Cardiac septum (tissue), 1 donor: ENCODE measurements at regions of chr12 and their contacts with region 1.

Region 1: DNA sequence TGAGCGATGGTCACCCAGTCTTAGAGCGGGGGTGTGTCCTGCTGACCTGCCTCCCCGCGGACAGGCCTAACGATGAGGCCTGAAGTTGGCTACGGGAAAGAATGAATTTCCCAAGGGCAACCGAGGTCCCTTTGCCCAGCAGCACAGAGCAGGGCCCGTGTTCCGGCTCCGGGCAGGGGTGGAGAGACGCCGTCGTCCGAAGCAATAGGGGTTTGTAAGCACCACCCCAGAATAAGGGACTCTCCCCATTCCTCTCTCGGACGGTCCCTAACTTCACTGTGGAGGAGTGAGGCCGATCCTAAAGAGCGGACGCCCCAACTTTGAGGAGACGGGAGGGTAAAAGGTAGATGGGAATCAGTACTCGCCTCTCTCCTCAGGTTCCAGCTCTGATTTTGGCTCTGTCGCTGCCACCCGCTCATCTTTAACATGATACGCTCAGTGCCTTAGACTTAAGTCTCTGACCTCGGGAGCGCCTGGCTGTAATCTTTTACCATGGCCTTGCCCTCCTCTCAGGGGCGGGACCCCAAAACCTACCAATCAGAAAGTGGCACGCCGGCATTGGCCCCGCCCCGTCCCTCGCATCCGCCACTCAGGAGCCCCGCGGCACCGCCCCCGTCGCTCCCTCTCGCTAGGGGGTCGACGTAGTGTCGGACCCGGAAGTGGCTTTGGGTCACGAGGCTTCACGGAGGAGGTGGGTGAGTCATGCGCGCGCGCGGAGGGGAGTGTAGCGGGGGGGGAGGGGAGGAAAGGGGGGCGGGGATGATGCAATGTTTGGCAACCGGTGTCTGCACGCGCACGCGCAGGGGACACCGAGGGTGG is at the start of gene DDIT3:
- DNase-seq: peak; percentile 100
- total RNA-seq, gene DDIT3: 24.0 TPM

Region 2: GRCh38 chr12:57487597-57488401 is 32.5 kb before region 1 on chr12 and contains the start of gene MARS1:
- intact Hi-C with region 1: loop called (anchors 5 kb)
- DNase-seq: peak; percentile 97
- total RNA-seq, gene MARS1: 89.2 TPM

Region 3: DNA sequence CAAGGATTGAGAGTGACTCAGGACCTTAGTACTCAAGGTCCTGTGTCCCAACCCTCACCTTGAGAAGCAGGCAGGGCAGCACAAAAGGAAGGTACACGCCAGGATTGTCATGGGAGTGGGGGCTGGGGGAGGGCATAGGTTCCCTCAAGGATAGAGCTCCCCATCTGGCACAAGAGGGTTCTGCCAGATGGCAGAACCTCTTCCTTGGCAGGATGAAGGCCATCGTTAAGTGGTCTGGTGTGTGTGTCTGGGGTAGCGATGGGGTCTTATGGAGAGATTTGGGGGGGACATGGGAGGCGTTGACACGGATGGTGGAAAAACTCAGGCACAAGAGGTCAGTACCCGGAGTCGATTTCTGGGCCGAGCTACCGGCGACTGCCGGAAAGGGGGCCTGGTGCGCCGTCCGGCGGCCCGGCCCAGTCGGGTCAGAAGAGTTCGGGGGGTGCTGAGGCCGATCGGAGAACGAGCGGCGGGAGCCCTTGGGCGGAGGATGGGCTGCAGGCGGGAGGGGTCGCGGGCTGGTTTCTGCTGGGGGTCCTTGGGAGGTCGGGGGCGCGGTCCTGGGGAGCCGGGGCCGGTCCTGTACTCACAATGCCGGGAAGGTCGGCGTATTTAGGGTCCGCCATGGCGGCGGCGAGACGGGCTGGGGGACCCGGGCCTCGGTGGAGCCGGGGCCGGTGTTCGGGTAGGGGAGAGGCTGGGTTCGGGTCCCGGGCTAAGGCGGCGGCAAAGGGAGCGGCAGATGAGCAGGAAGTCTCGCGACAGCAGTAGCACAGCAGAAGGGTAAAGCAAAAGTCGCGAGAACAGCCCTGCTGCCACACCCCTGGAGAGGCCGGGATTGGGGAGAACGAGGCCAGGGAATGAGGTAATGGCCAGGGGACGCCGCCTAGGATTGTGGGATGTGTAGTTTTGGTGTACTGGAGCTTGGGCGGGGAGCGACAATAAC is 26.4 kb after region 1 on chr12 and contains the start of gene DCTN2:
- intact Hi-C with region 1: loop called (anchors 2 kb)
- DNase-seq: peak; percentile 97
- total RNA-seq, gene DCTN2: 100 TPM

Region 4: GRCh38 chr12:57693659-57694458 is 173.6 kb after region 1 on chr12 and contains the start of gene OS9:
- intact Hi-C with region 1: loop called (anchors 5 kb)
- DNase-seq: peak; percentile 99
- total RNA-seq, gene OS9: 133 TPM